ENCODE measurements at regions of chr5 and their contacts with region 1.

Region 1: DNA sequence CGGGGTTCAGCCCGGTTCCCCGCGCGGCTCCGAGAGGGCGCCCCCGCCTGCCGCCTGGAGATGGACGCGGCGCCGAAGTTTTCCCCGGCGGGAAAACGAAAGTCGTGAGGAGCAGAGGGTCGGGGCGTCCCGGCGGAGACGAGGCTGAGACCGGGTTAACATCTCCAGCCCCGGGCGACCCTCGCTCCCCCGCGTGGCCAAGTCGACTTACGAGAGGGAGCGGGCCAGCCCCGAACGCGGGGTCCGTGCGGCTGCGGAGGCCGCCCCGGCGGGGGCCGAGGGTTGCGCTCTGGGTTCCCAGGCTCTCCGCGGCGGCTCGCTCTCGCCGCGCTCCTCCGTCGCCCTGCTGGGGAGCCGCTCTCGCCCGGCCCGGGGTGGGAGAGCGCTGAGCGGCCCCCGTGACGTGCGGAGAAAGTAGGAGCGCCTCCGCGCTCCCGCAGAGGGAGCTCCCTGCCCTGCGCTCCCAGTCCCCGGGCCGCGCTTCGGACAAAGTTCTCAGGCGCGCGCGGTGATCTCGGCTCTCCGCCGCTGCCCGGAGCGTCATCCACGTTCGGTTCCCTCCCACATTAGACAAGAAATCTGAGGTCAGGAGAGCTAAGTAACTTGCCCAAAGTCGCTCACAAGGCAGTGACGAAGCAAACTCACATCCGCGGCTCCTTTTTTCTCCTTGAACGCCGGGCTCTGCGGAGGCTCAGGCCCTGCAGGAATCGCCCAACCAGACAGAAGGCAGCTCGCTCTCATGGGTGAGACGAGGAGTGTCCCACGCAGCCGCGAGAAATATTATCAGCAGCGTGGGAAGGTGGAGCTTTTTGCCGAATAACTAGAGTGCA is 1.2 kb upstream of the GCNT4 start:
- DNase-seq: peak in 8 of 9 donors; percentile 49 to 81 (median 73)
- ATAC-seq: peak; percentile 57
- H3K4me3 ChIP-seq: peak overlapping the region; percentile 67
- H3K4me3 Mint-ChIP-seq: peak overlapping the region; percentile 89 to 95 (median 93)
- H3K27ac ChIP-seq: peak overlapping the region; percentile 87
- H3K27ac Mint-ChIP-seq: peak overlapping the region; percentile 84 to 99 (median 97)
- H3K4me1 ChIP-seq: peaks cover 64 to 75% of the 10 kb centered on the region in 2 donors
- H3K4me1 Mint-ChIP-seq: peaks cover 57 to 86% (median 79%) of the 10 kb centered on the region in 7 donors
- H3K27me3 ChIP-seq: no peaks in the 10 kb centered on the region
- H3K27me3 Mint-ChIP-seq: peaks cover 0 to 17% (median 0%) of the 10 kb centered on the region in 5 donors

Region 2: DNA sequence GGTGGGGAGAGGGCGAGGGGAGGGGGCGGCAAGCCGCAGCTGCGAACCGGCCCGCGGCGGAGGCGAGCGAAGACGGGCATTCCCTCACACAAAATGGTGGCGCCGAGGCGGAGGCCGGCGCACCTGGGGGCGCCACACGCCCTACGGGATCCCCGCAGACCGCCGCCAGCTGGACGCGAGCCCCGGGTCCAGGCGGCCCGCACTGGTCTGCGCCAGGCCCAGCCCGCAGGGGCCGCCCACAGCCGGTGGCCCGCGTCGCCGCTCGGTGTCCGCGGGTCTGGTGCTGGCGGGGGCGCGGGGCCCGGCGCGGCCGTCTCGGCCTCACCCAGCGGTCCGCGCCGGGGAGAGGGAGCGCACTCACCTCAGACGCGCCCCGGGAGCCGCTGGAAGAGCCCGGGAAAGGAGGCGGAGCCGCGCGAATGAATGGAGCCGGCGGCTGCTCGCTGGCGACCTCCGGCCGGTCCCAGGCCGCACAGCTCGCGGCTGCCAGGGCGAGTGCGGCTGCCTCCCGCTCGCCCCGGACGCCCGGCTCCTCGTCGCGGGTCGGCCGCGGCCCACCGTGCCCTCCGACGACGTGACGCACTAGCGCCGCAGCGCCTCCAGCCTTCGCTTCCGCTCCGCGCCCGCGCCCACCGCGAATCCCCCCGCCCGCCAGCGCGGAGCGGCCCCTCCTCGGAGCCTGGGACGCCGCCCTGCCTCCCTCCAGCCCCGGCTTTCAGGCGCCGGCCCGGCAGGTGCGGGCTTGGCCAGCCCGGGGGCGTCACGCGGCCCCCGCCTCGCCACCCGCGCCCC is 187.5 kb before region 1 on chr5 and contains the start of gene FAM169A:
- CTCF ChIA-PET with region 1: no interaction called
- POLR2A ChIA-PET with region 1: interaction called, 5 read pairs
- intact Hi-C with region 1: loop called in 1 of 2 experiments (anchors 5 kb)
- DNase-seq: peak; percentile 40 to 71 (median 61)
- ATAC-seq: peak; percentile 81
- H3K4me3 ChIP-seq: peak within 1 kb of the TSS; percentile 69
- H3K4me3 Mint-ChIP-seq: peak within 1 kb of the TSS; percentile 87 to 99 (median 97)
- H3K27ac ChIP-seq: peak within 1 kb of the TSS; percentile 78
- H3K27ac Mint-ChIP-seq: peak within 1 kb of the TSS; percentile 79 to 97 (median 95)
- H3K4me1 ChIP-seq: peaks cover 4 to 8% of the 10 kb centered on the region in 2 donors
- H3K4me1 Mint-ChIP-seq: peaks cover 7 to 49% (median 42%) of the 10 kb centered on the region in 7 donors
- H3K27me3 ChIP-seq: no peaks in the 10 kb centered on the region
- H3K27me3 Mint-ChIP-seq: peaks cover 0 to 26% (median 0%) of the 10 kb centered on the region in 5 donors
- total RNA-seq, gene FAM169A: 2.3 to 22.4 (median 15.6) TPM

Region 3: DNA sequence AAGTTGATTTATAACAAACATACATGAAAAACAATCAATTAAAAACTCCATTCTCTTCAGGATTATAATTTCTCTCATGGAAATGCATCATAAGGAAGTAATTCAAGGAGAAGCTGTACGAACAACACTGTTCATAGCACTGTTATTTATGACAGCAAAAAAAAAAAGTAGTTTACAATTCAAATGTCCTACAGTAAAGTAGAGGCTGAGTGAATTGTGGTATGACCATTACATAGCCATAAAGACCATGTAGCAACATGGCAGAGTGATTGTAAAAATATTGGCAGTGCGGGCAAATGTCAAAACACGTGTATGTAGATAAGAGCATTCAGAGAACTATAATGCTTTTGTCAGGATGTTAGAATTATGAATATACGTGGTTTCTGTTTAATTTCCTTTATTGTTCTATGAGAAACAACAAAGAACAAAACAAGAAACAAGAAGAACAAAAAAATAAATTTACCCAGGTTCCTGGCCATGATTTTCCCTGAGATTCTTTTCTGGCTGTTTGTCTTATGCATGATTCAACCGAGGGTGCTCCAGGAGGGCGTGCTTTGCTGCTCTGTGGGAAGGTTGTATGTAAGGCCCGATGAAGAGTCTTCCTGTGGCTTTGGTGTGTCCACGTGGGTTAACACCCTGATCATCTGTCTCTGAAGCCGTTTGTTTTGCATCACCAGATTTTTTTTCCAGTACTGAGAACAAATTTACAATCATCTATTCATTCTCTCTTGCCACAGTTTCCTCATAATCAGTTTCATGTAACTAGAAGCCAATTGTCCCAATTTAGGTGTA is 30.0 kb before region 1 on chr5:
- CTCF ChIA-PET with region 1: interaction called, 10 read pairs
- POLR2A ChIA-PET with region 1: interaction called, 6 read pairs
- intact Hi-C with region 1: no loop called
- DNase-seq: peak in 6 of 9 donors; percentile 22 to 41 (median 37)
- ATAC-seq: peak; percentile 83
- H3K4me3 ChIP-seq: no peak overlapping the region
- H3K4me3 Mint-ChIP-seq: peak overlapping the region; percentile 1 to 65 (median 46)
- H3K27ac ChIP-seq: no peak overlapping the region
- H3K27ac Mint-ChIP-seq: peak overlapping the region in 8 of 9 donors; percentile 28 to 85 (median 66)
- H3K4me1 ChIP-seq: peaks cover 11 to 25% of the 10 kb centered on the region in 2 donors
- H3K4me1 Mint-ChIP-seq: peaks cover 28 to 49% (median 40%) of the 10 kb centered on the region in 7 donors
- H3K27me3 ChIP-seq: no peaks in the 10 kb centered on the region
- H3K27me3 Mint-ChIP-seq: peaks cover 0 to 3% (median 0%) of the 10 kb centered on the region in 5 donors

Region 4: DNA sequence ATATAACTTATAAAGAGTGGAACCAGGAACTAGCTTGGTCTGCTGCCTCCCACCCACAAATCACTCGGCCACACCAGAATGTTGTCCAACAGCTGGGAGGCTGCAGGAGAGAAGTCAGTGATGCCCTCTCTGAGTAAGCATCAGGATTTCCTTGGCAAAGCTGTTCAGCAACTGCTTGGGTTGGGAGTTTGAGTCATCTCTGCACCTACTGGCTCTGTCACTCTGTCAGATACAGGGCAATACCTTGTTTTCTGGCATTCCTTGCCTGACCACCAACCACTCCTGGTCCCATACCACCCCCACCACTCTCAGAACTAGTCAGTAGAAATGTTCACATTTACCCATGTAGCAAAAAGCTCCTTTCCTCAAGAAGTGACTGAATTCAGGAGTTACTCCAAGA is 35.6 kb after region 1 on chr5:
- CTCF ChIA-PET with region 1: interaction called, 4 read pairs
- POLR2A ChIA-PET with region 1: interaction called, 5 read pairs
- intact Hi-C with region 1: loop called in 1 of 2 experiments (anchors 5 kb)
- DNase-seq: peak in 1 of 9 donors; percentile 22
- ATAC-seq: no peak
- H3K4me3 ChIP-seq: no peak overlapping the region
- H3K4me3 Mint-ChIP-seq: peak overlapping the region in 1 of 10 donors; percentile 4
- H3K27ac ChIP-seq: no peak overlapping the region
- H3K27ac Mint-ChIP-seq: peak overlapping the region in 3 of 9 donors; percentile 4 to 52 (median 12)
- H3K4me1 ChIP-seq: peaks cover 0 to 5% of the 10 kb centered on the region in 2 donors
- H3K4me1 Mint-ChIP-seq: peaks cover 0 to 33% (median 9%) of the 10 kb centered on the region in 7 donors
- H3K27me3 ChIP-seq: no peaks in the 10 kb centered on the region
- H3K27me3 Mint-ChIP-seq: peaks cover 0 to 4% (median 0%) of the 10 kb centered on the region in 5 donors

Region 5: DNA sequence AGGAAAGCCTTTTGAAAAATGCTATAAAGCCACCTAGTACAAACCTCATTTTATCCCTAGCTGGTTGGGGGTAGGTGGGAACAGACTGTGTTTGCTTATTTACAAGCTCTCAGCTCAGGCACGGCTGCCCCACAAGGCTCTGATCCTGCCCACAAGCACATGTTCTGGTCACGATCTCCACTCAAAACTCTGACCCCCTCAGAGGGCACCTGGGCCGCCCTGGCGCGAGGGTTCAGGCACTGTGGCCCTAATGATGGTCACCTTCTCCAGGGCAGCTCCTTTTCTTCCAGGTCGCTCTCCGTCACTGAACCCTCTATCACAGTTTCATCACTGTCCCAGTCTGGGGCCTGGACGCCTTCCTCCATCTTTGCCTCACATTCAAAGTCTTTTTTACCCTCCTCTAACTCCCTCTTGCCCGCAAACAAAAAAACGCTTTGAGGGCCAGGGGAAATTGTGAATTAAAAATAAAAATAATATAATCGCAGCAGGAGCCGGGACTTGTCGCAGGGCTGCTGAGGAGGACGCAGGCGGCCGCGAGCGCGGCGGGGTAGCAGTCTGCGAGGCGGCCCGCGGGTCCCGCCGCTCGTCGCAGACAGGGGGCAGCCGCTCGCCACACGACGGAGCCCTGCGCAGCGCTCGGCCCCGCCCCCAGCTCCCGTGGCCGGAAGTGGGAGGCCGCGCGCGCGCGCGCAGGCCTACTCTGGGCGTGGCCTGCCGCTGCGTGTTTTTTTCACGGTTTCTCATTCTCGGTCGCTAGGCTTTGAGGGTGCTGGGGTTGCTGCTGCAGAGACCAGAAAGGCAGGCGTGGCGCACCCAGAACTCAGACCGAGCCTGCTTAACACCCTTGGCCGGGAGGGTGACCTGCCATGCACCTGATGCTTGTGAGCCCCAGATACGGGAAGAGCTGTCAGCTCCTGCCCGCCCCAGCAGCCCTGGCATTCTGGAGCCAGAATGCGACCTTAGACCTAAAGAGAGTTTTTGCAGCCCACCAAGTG is 183.1 kb after region 1 on chr5 and contains the start of gene ANKRD31:
- CTCF ChIA-PET with region 1: interaction called, 25 read pairs
- POLR2A ChIA-PET with region 1: interaction called, 127 read pairs
- intact Hi-C with region 1: loop called (anchors 1 kb)
- DNase-seq: peak; percentile 83 to 97 (median 93)
- ATAC-seq: peak; percentile 100
- H3K4me3 ChIP-seq: peak within 1 kb of the TSS; percentile 69
- H3K4me3 Mint-ChIP-seq: peak within 1 kb of the TSS; percentile 78 to 99 (median 96)
- H3K27ac ChIP-seq: peak within 1 kb of the TSS; percentile 80
- H3K27ac Mint-ChIP-seq: peak within 1 kb of the TSS; percentile 89 to 99 (median 98)
- H3K4me1 ChIP-seq: peaks cover 0 to 17% of the 10 kb centered on the region in 2 donors
- H3K4me1 Mint-ChIP-seq: peaks cover 3 to 22% (median 18%) of the 10 kb centered on the region in 7 donors
- H3K27me3 ChIP-seq: no peaks in the 10 kb centered on the region
- H3K27me3 Mint-ChIP-seq: peaks cover 0 to 4% (median 0%) of the 10 kb centered on the region in 5 donors
- total RNA-seq, gene ANKRD31: 0.29 to 1.6 (median 0.93) TPM

Region 6: DNA sequence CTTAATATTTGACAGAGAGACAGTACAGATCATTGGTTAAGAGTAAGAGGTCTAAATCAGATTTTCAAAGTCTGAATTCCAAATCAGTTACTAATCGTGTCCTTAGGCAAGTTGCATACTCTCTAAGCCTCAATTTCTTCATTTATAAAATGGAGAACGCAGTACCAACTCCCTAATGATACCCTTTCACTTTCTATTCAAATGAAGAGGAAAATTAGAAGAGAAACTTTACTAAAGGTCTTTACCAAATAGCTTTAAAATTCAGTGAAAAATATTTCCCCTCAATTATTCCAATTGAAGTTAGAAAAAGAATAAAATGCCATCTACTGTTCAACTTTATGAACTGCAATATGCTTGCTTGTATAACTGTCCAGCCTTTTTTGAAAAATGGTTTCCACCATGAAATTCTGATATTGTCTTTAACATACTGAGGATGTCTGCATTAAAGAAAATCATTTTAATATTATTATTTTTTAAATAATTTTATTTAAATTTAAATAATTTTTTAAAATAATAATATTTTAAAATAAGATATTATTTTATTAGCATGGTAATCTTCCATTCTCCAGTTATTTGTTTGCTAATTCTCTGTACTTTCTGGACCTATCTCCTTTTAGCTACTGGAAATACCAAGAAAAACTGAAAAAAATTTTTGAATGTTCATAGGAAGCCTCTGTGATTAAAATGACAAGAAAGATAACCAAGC is 627.8 kb after region 1 on chr5:
- CTCF ChIA-PET with region 1: no interaction called
- POLR2A ChIA-PET with region 1: interaction called, 4 read pairs
- intact Hi-C with region 1: loop called (anchors 2 kb)
- DNase-seq: peak in 4 of 9 donors; percentile 24 to 46 (median 38)
- ATAC-seq: peak; percentile 66
- H3K4me3 ChIP-seq: no peak overlapping the region
- H3K4me3 Mint-ChIP-seq: no peak overlapping the region
- H3K27ac ChIP-seq: no peak overlapping the region
- H3K27ac Mint-ChIP-seq: no peak overlapping the region
- H3K4me1 ChIP-seq: peaks cover 0 to 3% of the 10 kb centered on the region in 2 donors
- H3K4me1 Mint-ChIP-seq: peaks cover 7 to 27% (median 18%) of the 10 kb centered on the region in 7 donors
- H3K27me3 ChIP-seq: no peaks in the 10 kb centered on the region
- H3K27me3 Mint-ChIP-seq: no peaks in the 10 kb centered on the region

Region 7: DNA sequence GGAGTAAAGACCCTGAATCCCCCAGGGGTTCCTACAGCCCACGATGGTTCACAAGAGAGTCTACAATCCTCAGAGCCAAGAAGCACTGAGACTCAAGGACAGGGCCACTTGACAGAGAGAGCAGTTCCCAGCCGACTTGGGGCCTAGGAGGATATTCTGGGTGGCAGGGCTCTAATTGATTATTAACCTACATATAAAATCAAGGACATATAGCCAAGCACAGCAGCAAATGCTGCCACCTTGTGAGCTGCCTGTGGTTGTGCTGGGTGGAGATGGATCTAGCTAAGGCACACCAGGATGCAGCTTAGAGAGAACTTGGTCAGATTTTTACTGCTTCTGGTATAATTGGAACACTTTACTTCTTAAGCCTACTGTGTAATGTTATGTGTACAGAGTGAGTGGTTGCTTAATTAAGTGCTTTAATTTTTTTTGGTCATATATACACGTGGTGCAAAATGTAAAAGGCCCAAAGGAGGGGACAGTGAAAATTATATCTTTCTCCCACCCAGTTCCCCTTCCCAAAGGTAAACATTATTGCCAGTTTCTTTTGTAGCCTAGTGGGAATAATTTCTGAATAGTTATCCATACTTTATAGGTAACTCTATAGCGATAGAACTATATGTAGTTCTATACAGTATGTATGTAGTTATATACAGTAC is 1490.9 kb after region 1 on chr5:
- CTCF ChIA-PET with region 1: no interaction called
- POLR2A ChIA-PET with region 1: no interaction called
- intact Hi-C with region 1: loop called in 1 of 2 experiments (anchors 5 kb)
- DNase-seq: peak in 8 of 9 donors; percentile 37 to 69 (median 58)
- ATAC-seq: peak; percentile 31
- H3K4me3 ChIP-seq: peak overlapping the region; percentile 33
- H3K4me3 Mint-ChIP-seq: peak overlapping the region; percentile 43 to 80 (median 74)
- H3K27ac ChIP-seq: peak overlapping the region; percentile 73
- H3K27ac Mint-ChIP-seq: peak overlapping the region; percentile 93 to 98 (median 96)
- H3K4me1 ChIP-seq: peaks cover 57 to 86% of the 10 kb centered on the region in 2 donors
- H3K4me1 Mint-ChIP-seq: peaks cover 64 to 89% (median 84%) of the 10 kb centered on the region in 7 donors
- H3K27me3 ChIP-seq: no peaks in the 10 kb centered on the region
- H3K27me3 Mint-ChIP-seq: no peaks in the 10 kb centered on the region

Measured in naive thymus-derived CD4-positive, alpha-beta T cell (primary cell).